ENCODE measurements at regions of chr12 and their contacts with region 1.

Region 1: GRCh38 chr12:115998119-115998633 is 279.3 kb downstream of the MED13L start:
- DNase-seq: no peak
- ATAC-seq: peak; percentile 26 to 58
- H3K4me3 ChIP-seq: no peak overlapping the region
- H3K27ac ChIP-seq: no peak overlapping the region
- H3K4me1 ChIP-seq: no peaks in the 10 kb centered on the region
- H3K27me3 ChIP-seq: no peaks in the 10 kb centered on the region

Region 2: GRCh38 chr12:116717466-116718437 is 719.6 kb after region 1 on chr12:
- intact Hi-C with region 1: loop called in 1 of 4 experiments (anchors 10 kb)
- DNase-seq: peak; percentile 78 to 86 (median 85)
- ATAC-seq: peak; percentile 83 to 89
- H3K4me3 ChIP-seq: no peak overlapping the region
- H3K27ac ChIP-seq: no peak overlapping the region
- H3K4me1 ChIP-seq: peaks cover 6% of the 10 kb centered on the region
- H3K27me3 ChIP-seq: no peaks in the 10 kb centered on the region

Measured in right cardiac atrium (tissue), 5 donors.